GM10248 (cell line): ENCODE measurements at regions of chr4 and their contacts with region 1.

Region 1: DNA sequence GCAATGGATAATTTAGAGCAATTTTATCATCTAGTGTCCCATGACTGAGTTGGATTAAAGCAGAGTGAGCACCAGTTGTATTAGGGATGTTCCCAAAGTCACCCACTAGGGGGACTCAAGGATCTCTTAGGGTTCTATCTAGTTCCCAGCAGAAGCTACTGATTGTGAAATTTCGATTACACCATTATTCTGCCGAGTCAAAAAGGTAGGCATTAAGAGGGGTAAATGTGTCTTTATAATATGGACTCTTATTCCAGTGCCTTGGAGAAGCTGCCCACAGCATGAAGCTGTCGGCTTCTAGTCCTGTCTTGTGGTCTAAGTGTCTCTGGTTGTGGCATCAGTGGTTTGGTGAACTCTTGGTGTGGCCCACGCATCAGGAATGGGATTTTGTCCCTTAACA is 53.3 kb downstream of the RGS12 start:
- DNase-seq: peak; percentile 82
- CTCF ChIP-seq: peak; percentile 76

Region 2: GRCh38 chr4:3330707-3331106 is 15.4 kb before region 1 on chr4:
- CTCF ChIA-PET with region 1: interaction called, 15 read pairs
- POLR2A ChIA-PET with region 1: no interaction called
- DNase-seq: no peak
- CTCF ChIP-seq: no peak

Region 3: DNA sequence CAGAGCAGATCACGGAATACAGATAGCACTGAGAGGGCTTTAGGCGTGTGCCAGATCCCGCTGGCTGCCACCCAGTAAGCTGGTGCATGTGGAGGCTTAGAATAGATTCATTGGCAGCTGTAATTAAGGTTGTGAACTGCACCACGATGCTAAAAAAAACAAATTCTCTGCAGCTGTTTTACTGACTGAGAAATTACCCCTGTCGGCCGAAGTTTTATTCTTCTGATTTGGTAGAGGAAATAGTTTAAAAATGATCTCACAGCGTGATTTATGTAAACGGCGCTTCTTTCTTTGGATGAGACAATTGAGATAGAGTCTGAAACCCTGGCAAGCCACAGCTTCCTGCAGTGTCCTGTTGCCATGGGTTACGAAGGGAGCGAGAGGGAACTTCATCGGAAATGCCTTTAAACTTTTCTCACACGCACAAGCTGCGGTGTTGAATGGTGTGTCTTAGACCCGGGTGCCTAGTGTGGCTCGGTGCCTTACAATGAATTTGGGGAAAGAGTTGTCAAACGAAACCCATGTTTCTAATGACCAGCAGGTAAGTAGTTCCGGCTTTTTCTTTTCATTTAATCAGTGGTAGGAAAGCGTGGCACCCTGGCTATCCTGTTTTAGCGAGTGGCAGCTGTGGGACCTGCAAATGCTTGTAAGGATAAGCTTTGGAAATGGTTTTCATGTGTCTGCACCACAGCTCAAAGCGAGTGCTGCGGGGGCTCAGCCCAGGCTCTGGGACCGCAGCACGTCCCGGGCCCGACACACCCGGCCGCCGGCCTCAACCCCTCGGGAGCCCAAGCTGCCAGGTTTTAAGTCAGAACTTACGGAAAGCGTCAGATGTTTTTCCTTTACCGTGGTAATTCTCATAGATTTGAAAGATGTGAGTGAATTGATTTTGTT is 23.9 kb after region 1 on chr4:
- CTCF ChIA-PET with region 1: interaction called, 14 read pairs
- POLR2A ChIA-PET with region 1: no interaction called
- DNase-seq: peak; percentile 38
- CTCF ChIP-seq: no peak

Region 4: DNA sequence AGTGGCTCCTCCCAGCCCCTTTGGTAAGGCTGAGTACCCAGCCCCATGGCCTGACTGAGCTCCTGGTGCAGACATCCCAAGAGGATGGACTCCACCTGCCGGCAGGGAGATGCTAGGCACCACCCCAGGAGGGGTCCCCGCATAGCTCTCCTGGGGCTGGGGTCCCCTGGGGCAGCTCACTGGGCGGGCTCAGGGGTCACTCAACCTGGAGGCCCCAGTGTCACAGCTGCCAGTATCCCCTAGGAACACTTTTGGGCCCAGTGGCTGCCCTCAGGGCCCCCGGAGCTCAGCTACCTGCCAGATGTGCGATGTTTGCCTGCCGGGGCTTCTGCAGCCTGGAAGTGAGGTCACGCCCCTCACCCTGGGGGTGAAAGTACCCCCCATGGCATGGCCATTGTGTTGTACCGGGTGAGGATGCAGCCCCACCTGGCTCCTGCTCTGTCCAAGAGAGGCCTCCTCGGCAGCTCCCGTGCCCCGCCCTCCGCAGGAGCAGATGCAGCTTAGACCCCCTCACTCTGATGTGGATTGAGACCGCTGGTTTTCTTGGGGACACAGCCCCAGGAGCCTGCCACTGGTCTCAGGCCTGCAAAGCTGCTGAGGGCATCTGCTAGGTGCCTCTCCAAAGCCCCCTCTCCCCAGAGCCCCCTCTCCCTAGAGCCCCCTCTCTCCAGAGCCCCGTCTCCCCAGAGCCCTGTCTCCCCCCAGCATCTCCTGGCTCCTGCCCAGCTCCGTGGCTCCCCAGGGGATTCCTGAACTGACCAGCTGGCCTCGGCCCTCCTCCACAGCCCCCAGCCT is 88.9 kb after region 1 on chr4:
- CTCF ChIA-PET with region 1: interaction called, 100 read pairs
- POLR2A ChIA-PET with region 1: no interaction called
- DNase-seq: no peak
- CTCF ChIP-seq: no peak

Region 5: DNA sequence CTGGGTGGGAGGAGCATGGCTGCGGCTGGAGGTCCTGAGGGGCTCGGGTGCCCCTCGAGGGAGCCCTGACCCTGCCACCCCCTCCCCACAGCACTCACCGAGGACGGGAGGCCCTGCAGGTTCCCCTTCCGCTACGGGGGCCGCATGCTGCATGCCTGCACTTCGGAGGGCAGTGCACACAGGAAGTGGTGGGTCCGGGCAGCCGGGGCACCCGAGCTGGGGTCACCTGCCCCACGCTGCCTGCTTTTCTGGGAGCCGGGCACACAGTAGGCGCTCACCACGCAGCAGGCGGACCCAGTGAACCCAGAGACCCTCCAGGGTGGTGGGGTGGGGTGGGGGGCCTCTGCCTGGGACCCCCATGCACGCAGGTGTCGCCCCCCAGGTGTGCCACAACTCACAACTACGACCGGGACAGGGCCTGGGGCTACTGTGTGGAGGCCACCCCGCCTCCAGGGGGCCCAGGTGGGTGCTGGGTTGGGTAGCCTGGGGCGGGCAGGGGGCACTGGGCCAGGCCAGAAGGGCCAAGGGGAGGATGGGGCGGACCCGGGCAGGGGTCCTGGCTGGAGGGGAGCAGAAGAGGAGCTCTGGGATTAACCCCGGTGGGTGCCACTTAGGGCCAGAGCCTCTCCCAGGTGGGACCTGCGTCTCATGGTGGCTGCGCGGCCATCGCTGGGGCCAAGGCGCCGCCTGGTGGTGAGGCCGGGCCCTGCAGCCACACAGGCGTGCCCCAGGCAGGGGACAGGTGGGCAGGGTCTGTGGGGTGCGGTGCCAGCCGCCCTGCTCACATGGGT is 97.0 kb after region 1 on chr4:
- CTCF ChIA-PET with region 1: interaction called, 100 read pairs
- POLR2A ChIA-PET with region 1: no interaction called
- DNase-seq: peak; percentile 93
- CTCF ChIP-seq: peak; percentile 99

Region 6: GRCh38 chr4:3449574-3450534 is 103.7 kb after region 1 on chr4:
- CTCF ChIA-PET with region 1: interaction called, 100 read pairs
- POLR2A ChIA-PET with region 1: no interaction called
- DNase-seq: no peak
- CTCF ChIP-seq: no peak

Region 7: DNA sequence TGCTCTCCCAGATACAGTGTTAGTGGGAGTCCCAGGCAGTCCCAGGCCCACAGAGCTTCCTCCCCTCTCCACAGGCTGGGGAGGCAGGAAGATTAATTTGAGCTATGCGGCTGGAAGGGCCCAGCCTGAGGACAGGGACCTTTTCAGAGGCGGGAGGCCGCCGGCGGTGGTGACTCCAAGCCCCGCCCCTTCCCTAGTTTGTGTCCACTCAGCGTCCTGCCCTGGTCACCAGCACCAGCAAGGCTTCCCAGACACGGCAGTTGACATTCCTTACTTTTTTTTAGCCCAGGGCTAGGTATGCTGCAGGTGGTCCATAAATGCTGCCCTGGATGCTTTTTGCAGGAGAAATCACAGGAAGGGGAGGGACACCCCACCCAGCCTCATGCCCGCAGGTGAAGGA is 253.8 kb after region 1 on chr4:
- CTCF ChIA-PET with region 1: no interaction called
- POLR2A ChIA-PET with region 1: no interaction called
- DNase-seq: no peak
- CTCF ChIP-seq: no peak